Common myeloid progenitor, CD34-positive (primary cell): ENCODE measurements at regions of chr16 and their contacts with region 1.

Region 1: GRCh38 chr16:361872-362701 is 8.3 kb downstream of the MRPL28 start:
- DNase-seq: peak; percentile 72 to 85 (median 85)
- H3K4me3 ChIP-seq: no peak overlapping the region
- H3K27ac ChIP-seq: no peak overlapping the region
- H3K4me1 ChIP-seq: peaks cover 0 to 3% (median 0%) of the 10 kb centered on the region in 4 experiments
- H3K27me3 ChIP-seq: peaks cover 0 to 9% (median 0%) of the 10 kb centered on the region in 5 experiments

Region 2: DNA sequence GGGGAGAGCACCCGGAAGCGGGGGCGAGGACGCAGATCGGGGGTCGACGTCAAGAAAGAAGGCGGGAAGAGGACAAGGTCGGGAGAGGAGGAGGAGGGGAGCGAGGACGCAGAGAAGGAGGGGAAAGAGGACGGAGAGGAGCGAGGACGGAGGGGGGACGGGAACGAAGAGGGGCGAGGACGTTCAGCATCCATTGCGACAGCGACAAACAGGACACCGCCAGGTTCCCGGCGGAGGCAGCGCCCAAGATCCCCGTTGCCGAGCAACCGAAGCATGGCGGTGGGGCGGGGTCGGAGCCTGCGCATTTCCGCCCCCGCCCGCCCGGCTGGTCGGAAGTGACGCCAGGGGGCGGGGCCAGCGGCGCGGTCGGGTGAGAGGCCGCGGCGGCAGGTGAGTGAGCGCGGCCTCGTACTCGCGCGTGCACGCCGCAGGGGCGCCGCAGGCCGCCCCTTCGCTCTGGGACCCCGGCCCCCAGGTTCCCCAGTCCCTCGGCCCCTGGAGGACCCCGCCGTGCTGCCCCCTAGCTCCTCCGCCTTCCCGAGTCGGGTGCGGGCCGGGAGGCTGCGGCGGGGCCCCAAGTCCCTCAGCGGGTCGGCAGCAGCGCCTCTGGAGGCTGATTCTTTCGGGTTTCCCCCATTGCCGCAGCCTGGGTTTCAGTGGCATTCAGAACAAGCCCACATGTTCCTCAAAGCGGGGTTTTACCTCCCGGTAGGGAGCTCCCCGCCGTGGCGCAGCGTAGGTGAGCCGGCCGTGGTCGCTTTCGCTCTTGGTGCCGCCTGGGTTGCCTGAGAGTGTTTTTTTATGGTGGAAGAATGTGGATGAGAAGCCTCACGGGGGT is 127.4 kb before region 1 on chr16 and contains the start of gene FAM234A:
- CTCF ChIA-PET with region 1: interaction called, 16 read pairs
- POLR2A ChIA-PET with region 1: interaction called, 3 read pairs
- DNase-seq: peak; percentile 94 to 97 (median 96)
- H3K4me3 ChIP-seq: peak within 1 kb of the TSS; percentile 68 to 99 (median 90)
- H3K27ac ChIP-seq: peak within 1 kb of the TSS; percentile 93 to 94
- H3K4me1 ChIP-seq: peaks cover 0 to 14% (median 8%) of the 10 kb centered on the region in 4 experiments
- H3K27me3 ChIP-seq: no peaks in the 10 kb centered on the region

Region 3: DNA sequence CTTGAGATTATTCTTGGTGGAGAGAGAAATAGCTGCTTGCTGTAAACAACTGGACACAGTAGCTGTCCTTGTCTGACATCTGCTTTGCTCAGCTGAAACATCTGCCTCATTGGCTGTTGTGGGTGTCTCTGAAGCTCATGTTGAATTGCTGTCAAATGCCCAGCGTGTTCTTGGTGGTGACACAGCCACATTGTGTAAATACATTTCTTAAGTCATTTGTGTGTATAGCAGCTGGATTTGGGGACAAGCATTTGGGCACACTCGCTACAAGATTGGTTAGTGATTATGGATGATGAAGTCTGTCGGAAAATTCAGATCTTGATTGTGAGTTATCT is 122.2 kb before region 1 on chr16:
- CTCF ChIA-PET with region 1: interaction called, 16 read pairs
- POLR2A ChIA-PET with region 1: interaction called, 3 read pairs
- DNase-seq: no peak
- H3K4me3 ChIP-seq: no peak overlapping the region
- H3K27ac ChIP-seq: no peak overlapping the region
- H3K4me1 ChIP-seq: peaks cover 2 to 15% (median 12%) of the 10 kb centered on the region in 4 experiments
- H3K27me3 ChIP-seq: no peaks in the 10 kb centered on the region

Region 4: GRCh38 chr16:303760-304505 is 58.2 kb before region 1 on chr16:
- CTCF ChIA-PET with region 1: interaction called, 16 read pairs
- POLR2A ChIA-PET with region 1: no interaction called
- DNase-seq: peak; percentile 43 to 69 (median 69)
- H3K4me3 ChIP-seq: no peak overlapping the region
- H3K27ac ChIP-seq: no peak overlapping the region
- H3K4me1 ChIP-seq: peaks cover 0 to 10% (median 0%) of the 10 kb centered on the region in 4 experiments
- H3K27me3 ChIP-seq: no peaks in the 10 kb centered on the region